CD4-positive, alpha-beta T cell (primary cell): ENCODE measurements at regions of chr10 and their contacts with region 1.

Region 1: DNA sequence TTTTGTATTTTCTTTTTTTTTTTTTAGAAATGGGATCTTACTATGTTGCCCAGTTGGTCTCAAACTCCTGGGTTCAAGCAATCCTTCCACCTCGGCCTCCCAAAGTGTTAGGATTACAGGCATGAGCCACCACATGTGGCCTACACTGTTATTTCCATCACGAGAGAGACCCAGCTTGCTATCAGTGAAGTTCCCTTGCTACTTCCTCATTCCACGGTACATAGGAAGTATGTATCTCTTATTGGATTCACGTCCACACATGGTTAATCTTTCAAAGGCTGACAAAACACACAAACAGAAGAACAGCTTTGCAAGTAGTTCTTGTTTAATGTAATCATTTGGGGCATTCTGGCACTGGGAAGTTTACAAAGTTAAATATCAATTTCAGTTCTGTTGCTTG is 50.9 kb downstream of the DCLRE1A start:
- DNase-seq: no peak
- ATAC-seq: no peak
- H3K4me3 ChIP-seq: no peak overlapping the region
- H3K4me3 Mint-ChIP-seq: no peak overlapping the region
- H3K27ac ChIP-seq: no peak overlapping the region
- H3K27ac Mint-ChIP-seq: no peak overlapping the region
- H3K4me1 ChIP-seq: no peaks in the 10 kb centered on the region
- H3K4me1 Mint-ChIP-seq: no peaks in the 10 kb centered on the region
- H3K27me3 ChIP-seq: no peaks in the 10 kb centered on the region
- H3K27me3 Mint-ChIP-seq: peaks cover 23% of the 10 kb centered on the region
- CTCF ChIP-seq: no peak

Region 2: DNA sequence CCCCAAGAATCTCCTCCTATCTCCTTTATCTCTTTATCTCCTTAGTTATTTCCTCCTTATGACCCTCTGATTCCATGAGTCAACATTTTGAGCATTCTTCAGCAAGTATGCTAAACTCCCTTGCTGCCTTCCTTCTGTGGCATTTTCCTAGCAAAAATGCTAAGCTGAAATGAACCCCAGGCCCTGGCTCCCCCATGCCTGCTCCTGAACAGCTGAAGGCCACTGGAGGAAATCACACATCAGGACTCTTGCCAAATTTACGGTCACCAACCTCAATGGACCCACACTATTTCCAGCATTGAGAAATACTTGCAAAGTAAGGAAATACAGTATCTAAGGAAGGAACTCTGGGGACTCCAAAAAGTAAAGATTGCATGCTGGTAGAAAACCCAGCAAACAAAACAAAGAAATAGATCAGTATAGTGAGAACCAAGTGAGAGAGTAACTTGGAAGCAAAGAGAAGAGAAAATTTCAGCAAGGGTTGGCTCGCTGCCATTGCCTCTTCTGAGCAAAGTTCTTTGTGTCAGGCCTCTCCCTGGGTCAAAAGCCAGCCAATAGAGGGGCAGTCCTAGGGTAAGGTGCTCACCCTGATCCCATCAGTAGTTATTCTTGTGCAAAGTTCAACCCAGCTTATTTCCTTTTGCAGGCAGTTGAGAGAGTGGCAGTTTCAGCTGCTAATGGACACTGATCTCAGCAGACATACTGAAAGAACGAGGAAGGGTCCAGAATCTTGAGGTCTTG is 56.6 kb before region 1 on chr10:
- CTCF ChIA-PET with region 1: no interaction called
- POLR2A ChIA-PET with region 1: no interaction called
- intact Hi-C with region 1: no loop called
- DNase-seq: no peak
- ATAC-seq: no peak
- H3K4me3 ChIP-seq: no peak overlapping the region
- H3K4me3 Mint-ChIP-seq: no peak overlapping the region
- H3K27ac ChIP-seq: no peak overlapping the region
- H3K27ac Mint-ChIP-seq: no peak overlapping the region
- H3K4me1 ChIP-seq: no peaks in the 10 kb centered on the region
- H3K4me1 Mint-ChIP-seq: no peaks in the 10 kb centered on the region
- H3K27me3 ChIP-seq: no peaks in the 10 kb centered on the region
- H3K27me3 Mint-ChIP-seq: peaks cover 21% of the 10 kb centered on the region
- CTCF ChIP-seq: no peak

Region 3: GRCh38 chr10:113993489-113993991 is 190.5 kb after region 1 on chr10:
- CTCF ChIA-PET with region 1: no interaction called
- POLR2A ChIA-PET with region 1: no interaction called
- intact Hi-C with region 1: loop called (anchors 10 kb)
- DNase-seq: peak in 2 of 14 experiments; percentile 13 to 23
- ATAC-seq: no peak
- H3K4me3 ChIP-seq: no peak overlapping the region
- H3K4me3 Mint-ChIP-seq: no peak overlapping the region
- H3K27ac ChIP-seq: no peak overlapping the region
- H3K27ac Mint-ChIP-seq: no peak overlapping the region
- H3K4me1 ChIP-seq: peaks cover 6% of the 10 kb centered on the region
- H3K4me1 Mint-ChIP-seq: no peaks in the 10 kb centered on the region
- H3K27me3 ChIP-seq: peaks cover 5 to 13% of the 10 kb centered on the region in 2 experiments
- H3K27me3 Mint-ChIP-seq: peaks cover 21% of the 10 kb centered on the region
- CTCF ChIP-seq: no peak

Region 4: DNA sequence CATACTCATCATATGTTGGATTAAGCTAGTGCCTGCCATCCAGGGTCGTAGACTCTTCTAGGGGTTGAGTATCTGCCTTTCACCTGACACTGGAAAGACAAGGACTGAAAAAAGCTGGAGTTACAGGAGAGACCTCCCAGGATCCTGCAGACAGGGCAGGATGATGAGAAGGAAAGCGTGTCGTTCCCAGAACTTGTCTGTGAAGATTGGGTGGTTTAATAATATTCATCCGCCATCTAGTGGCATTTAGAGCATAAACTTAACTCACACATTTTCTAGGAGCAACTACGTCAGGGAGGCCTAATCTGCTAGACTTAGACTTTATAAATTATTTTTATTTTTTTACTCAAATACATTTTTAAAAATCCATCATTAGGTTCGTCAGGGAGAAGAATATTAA is 300.3 kb after region 1 on chr10:
- CTCF ChIA-PET with region 1: interaction called, 3 read pairs
- POLR2A ChIA-PET with region 1: interaction called, 4 read pairs
- intact Hi-C with region 1: loop called (anchors 1 kb)
- DNase-seq: peak in 3 of 14 experiments; percentile 52 to 62 (median 59)
- ATAC-seq: no peak
- H3K4me3 ChIP-seq: no peak overlapping the region
- H3K4me3 Mint-ChIP-seq: no peak overlapping the region
- H3K27ac ChIP-seq: no peak overlapping the region
- H3K27ac Mint-ChIP-seq: no peak overlapping the region
- H3K4me1 ChIP-seq: peaks cover 20% of the 10 kb centered on the region
- H3K4me1 Mint-ChIP-seq: peaks cover 31% of the 10 kb centered on the region
- H3K27me3 ChIP-seq: peaks cover 15 to 19% of the 10 kb centered on the region in 2 experiments
- H3K27me3 Mint-ChIP-seq: peaks cover 44% of the 10 kb centered on the region
- CTCF ChIP-seq: peak; percentile 65

Region 5: DNA sequence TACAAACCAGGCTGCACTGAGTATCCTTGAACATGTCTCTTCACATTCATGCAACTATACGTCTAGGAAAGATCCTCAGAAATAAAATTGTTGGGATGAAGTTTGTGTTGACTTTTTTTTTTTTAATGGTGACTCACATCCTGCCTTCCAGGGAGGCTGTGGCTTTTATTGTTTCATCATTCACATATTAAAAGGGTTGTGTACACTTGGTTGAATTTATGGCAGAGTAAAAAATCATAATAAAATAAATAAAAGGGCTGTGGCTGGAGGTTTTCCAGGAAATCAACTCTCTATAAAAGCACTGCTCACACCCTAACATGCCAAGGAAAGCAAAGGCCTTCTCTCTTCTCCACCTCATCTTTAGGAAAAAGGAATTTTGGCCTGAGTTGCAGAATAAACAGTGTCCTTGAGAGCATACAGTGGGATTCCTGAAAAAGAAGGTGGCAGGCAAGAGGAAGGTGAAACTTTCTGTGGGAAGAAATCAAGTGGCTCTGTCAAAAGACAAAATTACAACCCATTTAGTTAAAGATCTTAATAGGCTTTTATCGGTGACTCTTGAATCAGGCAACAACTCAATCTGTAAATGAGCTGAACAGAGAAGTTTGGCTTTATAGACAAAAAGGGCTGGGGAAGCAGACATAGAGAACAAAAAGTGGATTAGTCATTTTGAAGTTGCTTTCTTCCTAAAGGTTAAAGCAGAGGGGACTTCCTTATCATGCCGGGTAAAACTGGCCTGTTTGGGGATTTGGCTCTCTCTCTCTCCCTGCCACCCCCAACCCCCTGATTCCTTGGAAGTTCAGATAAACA is 977.0 kb after region 1 on chr10:
- CTCF ChIA-PET with region 1: no interaction called
- POLR2A ChIA-PET with region 1: no interaction called
- intact Hi-C with region 1: loop called (anchors 5 kb)
- DNase-seq: no peak
- ATAC-seq: no peak
- H3K4me3 ChIP-seq: no peak overlapping the region
- H3K4me3 Mint-ChIP-seq: no peak overlapping the region
- H3K27ac ChIP-seq: no peak overlapping the region
- H3K27ac Mint-ChIP-seq: no peak overlapping the region
- H3K4me1 ChIP-seq: no peaks in the 10 kb centered on the region
- H3K4me1 Mint-ChIP-seq: no peaks in the 10 kb centered on the region
- H3K27me3 ChIP-seq: no peaks in the 10 kb centered on the region
- H3K27me3 Mint-ChIP-seq: no peaks in the 10 kb centered on the region
- CTCF ChIP-seq: no peak